Posterior cingulate gyrus (tissue), 11 donors: ENCODE measurements at regions of chr11 and their contacts with region 1.

Region 1: GRCh38 chr11:12331239-12331874 is 46.0 kb upstream of the PARVA start:
- DNase-seq: peak; percentile 58 to 97 (median 86)

Region 2: DNA sequence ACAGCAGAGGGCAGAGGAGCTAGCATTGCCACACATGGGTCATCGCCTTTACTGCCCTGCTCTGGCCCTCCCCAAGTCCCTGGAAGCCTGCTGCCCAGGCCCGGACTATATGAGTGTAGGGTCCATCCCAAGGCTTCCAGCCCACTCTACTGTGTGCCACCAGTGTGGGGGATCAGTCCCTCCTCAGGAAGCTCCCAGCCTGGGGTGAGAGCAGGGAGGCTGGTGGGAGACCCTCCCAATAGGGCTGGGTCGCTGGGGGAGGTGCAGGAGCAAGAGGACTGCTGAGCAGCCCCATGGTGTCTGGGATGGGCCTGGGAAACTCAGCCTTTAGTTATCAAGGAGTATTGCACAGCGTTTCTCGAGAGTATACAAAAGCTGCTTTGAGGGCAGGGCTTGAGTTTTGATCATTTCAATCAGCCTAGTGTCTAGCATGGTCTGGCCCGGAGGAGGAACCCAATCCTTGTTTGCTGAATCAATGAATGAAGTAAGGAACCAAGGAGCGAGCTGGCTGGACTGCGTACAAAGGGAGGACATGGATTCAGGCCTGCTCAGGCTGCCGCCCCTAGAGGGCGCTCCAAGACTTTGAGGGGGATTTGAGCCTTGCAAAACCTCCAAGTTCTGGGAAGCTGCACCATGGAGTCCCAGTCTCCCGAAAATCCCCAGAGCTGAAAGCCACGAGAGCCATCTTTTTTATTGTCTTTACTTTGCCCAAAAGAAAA is 43.0 kb before region 1 on chr11:
- intact Hi-C with region 1: loop called (anchors 1 kb)
- DNase-seq: peak; percentile 70 to 97 (median 88)

Region 3: GRCh38 chr11:12411806-12412727 is 80.7 kb after region 1 on chr11:
- intact Hi-C with region 1: loop called (anchors 5 kb)
- DNase-seq: peak in 7 of 10 donors; percentile 28 to 89 (median 40)

Region 4: GRCh38 chr11:12673924-12674570 is 342.7 kb after region 1 on chr11 and contains the start of gene TEAD1:
- intact Hi-C with region 1: loop called (anchors 5 kb)
- DNase-seq: peak; percentile 92 to 100 (median 98)

Region 5: GRCh38 chr11:12888525-12889158 is 557.3 kb after region 1 on chr11:
- intact Hi-C with region 1: loop called (anchors 1 kb)
- DNase-seq: peak in 8 of 10 donors; percentile 35 to 92 (median 78)

Region 6: DNA sequence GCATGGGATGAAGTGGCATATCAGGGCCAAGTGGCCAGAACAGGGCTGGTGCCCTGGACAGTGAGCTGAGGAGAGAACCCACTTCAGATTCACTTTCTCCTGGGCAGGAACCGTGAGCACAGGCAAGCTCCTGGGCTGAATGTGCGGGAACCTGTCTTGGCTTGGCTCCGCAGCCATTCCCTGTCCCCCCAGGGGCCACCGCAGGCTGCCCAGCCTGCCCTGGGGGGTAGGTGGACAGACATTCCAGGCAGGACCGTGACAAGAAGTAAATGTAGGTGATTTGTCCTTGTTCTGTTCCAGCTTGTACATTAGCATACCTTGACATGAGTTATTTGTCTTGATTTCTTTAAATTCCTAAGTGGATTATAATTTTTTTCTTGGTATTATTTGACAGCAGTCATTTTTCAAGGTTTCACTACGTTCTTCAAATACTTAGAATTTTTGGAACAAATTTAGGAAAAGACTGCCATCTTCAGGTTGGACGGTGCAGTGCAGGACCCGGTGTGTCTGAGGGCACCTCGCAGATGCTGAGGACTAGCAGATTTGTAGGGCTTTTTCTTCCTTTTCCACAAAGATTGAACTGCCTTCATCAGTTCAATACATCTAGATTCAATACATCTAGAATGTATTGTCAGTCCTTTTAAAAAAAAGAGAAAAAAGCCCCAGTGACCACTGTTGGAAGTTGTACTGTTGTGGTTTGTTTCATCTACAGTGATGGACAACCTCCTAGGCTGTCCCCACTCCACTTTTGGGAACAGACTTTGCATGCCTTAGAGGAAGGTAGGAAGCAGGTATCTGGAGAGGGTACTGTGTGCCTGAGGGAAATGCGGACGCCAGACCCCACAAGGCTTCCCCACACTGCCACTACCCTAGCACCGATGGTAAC is 562.7 kb after region 1 on chr11:
- intact Hi-C with region 1: loop called (anchors 1 kb)
- DNase-seq: peak; percentile 49 to 94 (median 78)

Region 7: GRCh38 chr11:12963792-12964536 is 632.6 kb after region 1 on chr11:
- intact Hi-C with region 1: loop called (anchors 2 kb)
- DNase-seq: peak; percentile 33 to 94 (median 74)